CD4-positive, alpha-beta memory T cell (primary cell): ENCODE measurements at regions of chr11 and their contacts with region 1.

Region 1: GRCh38 chr11:102940714-102941588 is 14.6 kb downstream of the MMP13 start:
- DNase-seq: peak in 4 of 5 donors; percentile 22 to 39 (median 30)
- H3K4me3 ChIP-seq: no peak overlapping the region
- H3K4me3 Mint-ChIP-seq: no peak overlapping the region
- H3K27ac ChIP-seq: no peak overlapping the region
- H3K27ac Mint-ChIP-seq: no peak overlapping the region
- H3K4me1 ChIP-seq: no peaks in the 10 kb centered on the region
- H3K4me1 Mint-ChIP-seq: peaks cover 0 to 5% (median 3%) of the 10 kb centered on the region in 4 donors
- H3K27me3 ChIP-seq: peaks cover 3% of the 10 kb centered on the region
- H3K27me3 Mint-ChIP-seq: peaks cover 1 to 5% of the 10 kb centered on the region in 2 donors

Region 2: GRCh38 chr11:102914238-102915043 is 26.5 kb before region 1 on chr11:
- CTCF ChIA-PET with region 1: interaction called, 10 read pairs
- POLR2A ChIA-PET with region 1: no interaction called
- intact Hi-C with region 1: no loop called
- DNase-seq: no peak
- H3K4me3 ChIP-seq: no peak overlapping the region
- H3K4me3 Mint-ChIP-seq: no peak overlapping the region
- H3K27ac ChIP-seq: no peak overlapping the region
- H3K27ac Mint-ChIP-seq: no peak overlapping the region
- H3K4me1 ChIP-seq: no peaks in the 10 kb centered on the region
- H3K4me1 Mint-ChIP-seq: no peaks in the 10 kb centered on the region
- H3K27me3 ChIP-seq: no peaks in the 10 kb centered on the region
- H3K27me3 Mint-ChIP-seq: peaks cover 1 to 2% of the 10 kb centered on the region in 2 donors

Region 3: GRCh38 chr11:102929972-102930371 is 11.0 kb before region 1 on chr11:
- CTCF ChIA-PET with region 1: interaction called, 16 read pairs
- POLR2A ChIA-PET with region 1: no interaction called
- intact Hi-C with region 1: no loop called
- DNase-seq: no peak
- H3K4me3 ChIP-seq: no peak overlapping the region
- H3K4me3 Mint-ChIP-seq: no peak overlapping the region
- H3K27ac ChIP-seq: no peak overlapping the region
- H3K27ac Mint-ChIP-seq: no peak overlapping the region
- H3K4me1 ChIP-seq: no peaks in the 10 kb centered on the region
- H3K4me1 Mint-ChIP-seq: no peaks in the 10 kb centered on the region
- H3K27me3 ChIP-seq: no peaks in the 10 kb centered on the region
- H3K27me3 Mint-ChIP-seq: peaks cover 2 to 8% of the 10 kb centered on the region in 2 donors

Region 4: DNA sequence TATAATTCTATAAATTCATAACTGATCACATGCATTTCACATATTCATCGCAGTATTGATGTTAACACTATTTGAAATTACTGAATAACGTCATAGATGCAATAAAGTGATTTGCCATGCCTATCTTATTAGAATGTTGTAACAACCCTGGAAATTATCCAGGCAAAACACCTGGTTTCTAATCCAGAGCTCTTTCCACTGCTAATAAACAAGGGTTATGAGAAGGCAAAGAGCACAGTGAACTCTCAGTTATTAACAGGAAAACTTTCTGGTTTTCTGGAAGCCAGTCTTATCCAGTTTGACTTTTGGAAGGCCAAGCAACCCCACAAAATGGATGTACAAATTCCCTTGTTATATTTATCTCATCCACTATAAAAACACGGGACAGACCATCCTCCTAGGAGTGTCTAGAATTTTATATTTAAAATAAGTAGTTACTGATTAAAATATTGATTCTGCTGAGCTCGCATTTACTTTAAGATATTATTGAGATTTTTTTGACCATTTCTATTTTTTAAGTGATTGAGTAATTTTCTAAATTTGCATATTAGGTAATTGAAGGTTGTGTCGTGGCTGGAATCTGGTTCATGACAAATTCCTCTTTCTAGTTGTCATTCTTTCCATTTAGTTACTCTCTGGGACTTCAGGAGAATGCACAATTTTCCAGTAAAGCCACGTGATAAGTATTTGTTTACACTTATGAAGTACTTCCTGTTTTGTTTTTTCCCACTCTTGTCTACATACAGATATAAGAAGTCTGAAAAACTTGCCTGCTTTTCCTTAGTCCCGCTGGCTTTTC is 103.1 kb after region 1 on chr11:
- CTCF ChIA-PET with region 1: no interaction called
- POLR2A ChIA-PET with region 1: no interaction called
- intact Hi-C with region 1: no loop called
- DNase-seq: no peak
- H3K4me3 ChIP-seq: no peak overlapping the region
- H3K4me3 Mint-ChIP-seq: no peak overlapping the region
- H3K27ac ChIP-seq: no peak overlapping the region
- H3K27ac Mint-ChIP-seq: no peak overlapping the region
- H3K4me1 ChIP-seq: no peaks in the 10 kb centered on the region
- H3K4me1 Mint-ChIP-seq: no peaks in the 10 kb centered on the region
- H3K27me3 ChIP-seq: peaks cover 3% of the 10 kb centered on the region
- H3K27me3 Mint-ChIP-seq: peaks cover 0 to 2% of the 10 kb centered on the region in 2 donors